ENCODE measurements at regions of chr4 and their contacts with region 1.

Region 1: GRCh38 chr4:103091601-103092223 is 7.9 kb downstream of the BDH2 start:
- DNase-seq: peak; percentile 63
- ATAC-seq: peak; percentile 63
- H3K4me3 ChIP-seq: no peak overlapping the region
- H3K27ac ChIP-seq: no peak overlapping the region
- H3K4me1 ChIP-seq: no peaks in the 10 kb centered on the region
- H3K27me3 ChIP-seq: no peaks in the 10 kb centered on the region
- CTCF ChIP-seq: peak; percentile 59 to 88 (median 77)
- POLR2A ChIP-seq: no peak
- RAD21 ChIP-seq: peak; percentile 92

Region 2: DNA sequence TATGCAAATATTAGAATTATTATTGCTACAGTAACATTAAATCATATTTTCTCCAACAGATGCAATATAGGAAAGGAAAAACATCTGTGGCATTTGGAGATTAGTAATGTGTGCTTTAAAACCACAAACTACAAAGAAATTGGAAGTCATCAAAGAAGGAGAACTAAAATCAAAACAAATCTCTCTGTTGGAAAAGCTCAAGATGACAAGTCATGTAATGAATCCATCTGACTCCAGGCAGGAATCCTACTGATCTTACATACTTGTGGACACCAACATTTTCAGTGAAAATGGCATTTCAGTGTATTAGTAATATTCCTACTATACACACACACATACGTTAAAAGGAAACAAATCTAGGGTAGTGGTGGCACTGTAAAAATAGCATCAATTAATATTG is 844.7 kb before region 1 on chr4:
- CTCF ChIA-PET with region 1: no interaction called
- POLR2A ChIA-PET with region 1: no interaction called
- RAD21 ChIA-PET with region 1: no interaction called
- intact Hi-C with region 1: no loop called
- DNase-seq: no peak
- ATAC-seq: no peak
- H3K4me3 ChIP-seq: no peak overlapping the region
- H3K27ac ChIP-seq: no peak overlapping the region
- H3K4me1 ChIP-seq: peaks cover 5 to 11% of the 10 kb centered on the region in 2 experiments; a peak in 3 of 4 replicates
- H3K27me3 ChIP-seq: no peaks in the 10 kb centered on the region
- CTCF ChIP-seq: no peak
- POLR2A ChIP-seq: no peak
- RAD21 ChIP-seq: no peak

Region 3: DNA sequence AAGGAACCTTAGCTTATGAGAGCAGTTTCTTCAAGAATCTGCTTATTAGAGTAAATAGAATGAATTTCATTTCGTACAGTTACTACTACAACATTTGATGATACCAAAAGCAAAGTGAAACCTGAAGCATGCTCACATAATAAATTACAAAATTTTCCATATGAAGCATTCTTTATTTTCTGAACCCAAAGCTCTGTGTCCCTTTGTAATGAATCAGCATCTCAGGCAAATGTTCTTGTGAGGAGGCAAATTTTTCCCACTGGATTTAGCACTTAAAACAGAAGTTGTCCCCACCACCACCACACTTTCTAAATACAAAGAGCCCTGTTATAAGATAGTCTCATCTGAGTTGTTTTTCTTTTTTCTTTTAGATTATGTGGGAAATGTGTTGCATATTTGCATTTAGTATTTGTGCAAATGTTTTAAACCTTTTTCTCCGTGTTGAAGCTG is 661.2 kb before region 1 on chr4:
- CTCF ChIA-PET with region 1: interaction called, 14 read pairs
- POLR2A ChIA-PET with region 1: no interaction called
- RAD21 ChIA-PET with region 1: no interaction called
- intact Hi-C with region 1: loop called (anchors 2 kb)
- DNase-seq: no peak
- ATAC-seq: no peak
- H3K4me3 ChIP-seq: peak overlapping the region; percentile 52 to 65
- H3K27ac ChIP-seq: peak overlapping the region; percentile 52; the same call in 1 of the 2 replicates
- H3K4me1 ChIP-seq: peaks cover 18 to 29% of the 10 kb centered on the region in 2 experiments; a peak in 3 of 4 replicates
- H3K27me3 ChIP-seq: no peaks in the 10 kb centered on the region
- CTCF ChIP-seq: no peak
- POLR2A ChIP-seq: no peak
- RAD21 ChIP-seq: no peak

Region 4: DNA sequence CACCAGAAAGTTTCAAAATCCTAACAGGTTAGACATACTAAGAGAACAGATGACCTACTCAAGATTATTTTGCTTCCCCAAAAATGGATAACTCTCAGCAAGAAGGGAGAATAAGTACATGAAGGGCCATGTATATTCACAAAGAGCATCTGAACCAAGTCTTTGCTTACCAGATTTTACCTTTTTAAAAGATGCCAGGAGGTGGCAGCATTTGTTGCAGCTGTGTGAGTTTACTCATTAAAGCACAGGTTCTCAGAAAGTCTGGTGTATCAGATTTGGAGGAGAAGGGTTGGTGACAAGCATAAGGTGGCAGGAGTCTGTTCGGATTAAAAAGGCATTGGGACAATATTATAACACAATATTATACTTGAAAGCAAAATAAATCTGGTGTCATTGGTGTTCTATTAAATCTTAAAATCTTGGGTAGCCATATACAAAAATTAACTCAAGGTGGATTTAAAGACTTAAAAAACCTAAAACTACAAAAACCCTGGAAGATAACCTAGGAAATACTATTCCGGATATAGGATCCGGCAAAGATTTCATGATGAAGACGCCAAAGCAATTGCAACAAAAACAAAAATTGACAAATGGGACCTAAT is 641.9 kb before region 1 on chr4:
- CTCF ChIA-PET with region 1: no interaction called
- POLR2A ChIA-PET with region 1: no interaction called
- RAD21 ChIA-PET with region 1: no interaction called
- intact Hi-C with region 1: loop called (anchors 5 kb)
- DNase-seq: peak; percentile 42
- ATAC-seq: peak; percentile 82
- H3K4me3 ChIP-seq: no peak overlapping the region
- H3K27ac ChIP-seq: no peak overlapping the region
- H3K4me1 ChIP-seq: no peaks in the 10 kb centered on the region
- H3K27me3 ChIP-seq: no peaks in the 10 kb centered on the region
- CTCF ChIP-seq: peak; percentile 54 to 82 (median 80)
- POLR2A ChIP-seq: no peak
- RAD21 ChIP-seq: peak; percentile 88

Region 5: GRCh38 chr4:102705351-102705935 is 386.3 kb before region 1 on chr4:
- CTCF ChIA-PET with region 1: no interaction called
- POLR2A ChIA-PET with region 1: no interaction called
- RAD21 ChIA-PET with region 1: no interaction called
- intact Hi-C with region 1: no loop called
- DNase-seq: no peak
- ATAC-seq: no peak
- H3K4me3 ChIP-seq: no peak overlapping the region
- H3K27ac ChIP-seq: no peak overlapping the region
- H3K4me1 ChIP-seq: no peaks in the 10 kb centered on the region
- H3K27me3 ChIP-seq: no peaks in the 10 kb centered on the region
- CTCF ChIP-seq: no peak
- POLR2A ChIP-seq: no peak
- RAD21 ChIP-seq: no peak

Region 6: GRCh38 chr4:103032574-103032973 is 59.1 kb before region 1 on chr4:
- CTCF ChIA-PET with region 1: no interaction called
- POLR2A ChIA-PET with region 1: no interaction called
- RAD21 ChIA-PET with region 1: no interaction called
- intact Hi-C with region 1: loop called (anchors 5 kb)
- DNase-seq: peak; percentile 24
- ATAC-seq: peak; percentile 98
- H3K4me3 ChIP-seq: no peak overlapping the region
- H3K27ac ChIP-seq: no peak overlapping the region
- H3K4me1 ChIP-seq: no peaks in the 10 kb centered on the region
- H3K27me3 ChIP-seq: no peaks in the 10 kb centered on the region
- CTCF ChIP-seq: peak; percentile 28 to 74 (median 73); a peak in 5 of 6 replicates
- POLR2A ChIP-seq: no peak
- RAD21 ChIP-seq: peak; percentile 65

Region 7: GRCh38 chr4:103046416-103047290 is 45.1 kb before region 1 on chr4:
- CTCF ChIA-PET with region 1: no interaction called
- POLR2A ChIA-PET with region 1: no interaction called
- RAD21 ChIA-PET with region 1: no interaction called
- intact Hi-C with region 1: loop called (anchors 2 kb)
- DNase-seq: peak; percentile 19
- ATAC-seq: peak; percentile 99
- H3K4me3 ChIP-seq: no peak overlapping the region
- H3K27ac ChIP-seq: no peak overlapping the region
- H3K4me1 ChIP-seq: no peaks in the 10 kb centered on the region
- H3K27me3 ChIP-seq: no peaks in the 10 kb centered on the region
- CTCF ChIP-seq: peak; percentile 39 to 87 (median 74); a peak in 5 of 6 replicates
- POLR2A ChIP-seq: no peak
- RAD21 ChIP-seq: peak; percentile 51

Region 8: DNA sequence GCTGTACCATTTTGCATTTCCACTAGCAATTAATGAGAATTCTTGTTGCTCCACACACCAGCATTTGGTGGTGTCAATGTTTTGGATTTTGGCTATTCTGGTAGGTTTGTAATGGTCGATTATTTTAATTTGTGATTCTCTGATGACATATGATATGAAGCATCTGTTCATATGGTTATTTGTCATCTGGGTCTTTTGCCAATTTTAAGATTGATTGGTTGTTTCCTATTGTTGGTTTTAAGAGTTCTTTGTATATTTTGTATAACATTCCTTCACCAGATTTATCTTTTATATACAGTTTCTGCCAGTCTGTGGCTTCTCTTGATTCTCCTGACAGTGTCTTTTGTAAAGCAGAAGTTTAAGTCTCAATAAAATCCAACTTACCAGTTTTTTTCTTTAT is 26.5 kb after region 1 on chr4:
- CTCF ChIA-PET with region 1: no interaction called
- POLR2A ChIA-PET with region 1: no interaction called
- RAD21 ChIA-PET with region 1: no interaction called
- intact Hi-C with region 1: no loop called
- DNase-seq: no peak
- ATAC-seq: no peak
- H3K4me3 ChIP-seq: no peak overlapping the region
- H3K27ac ChIP-seq: no peak overlapping the region
- H3K4me1 ChIP-seq: no peaks in the 10 kb centered on the region
- H3K27me3 ChIP-seq: no peaks in the 10 kb centered on the region
- CTCF ChIP-seq: no peak
- POLR2A ChIP-seq: no peak
- RAD21 ChIP-seq: no peak